ENCODE measurements at regions of chr16 and their contacts with region 1.

Region 1: DNA sequence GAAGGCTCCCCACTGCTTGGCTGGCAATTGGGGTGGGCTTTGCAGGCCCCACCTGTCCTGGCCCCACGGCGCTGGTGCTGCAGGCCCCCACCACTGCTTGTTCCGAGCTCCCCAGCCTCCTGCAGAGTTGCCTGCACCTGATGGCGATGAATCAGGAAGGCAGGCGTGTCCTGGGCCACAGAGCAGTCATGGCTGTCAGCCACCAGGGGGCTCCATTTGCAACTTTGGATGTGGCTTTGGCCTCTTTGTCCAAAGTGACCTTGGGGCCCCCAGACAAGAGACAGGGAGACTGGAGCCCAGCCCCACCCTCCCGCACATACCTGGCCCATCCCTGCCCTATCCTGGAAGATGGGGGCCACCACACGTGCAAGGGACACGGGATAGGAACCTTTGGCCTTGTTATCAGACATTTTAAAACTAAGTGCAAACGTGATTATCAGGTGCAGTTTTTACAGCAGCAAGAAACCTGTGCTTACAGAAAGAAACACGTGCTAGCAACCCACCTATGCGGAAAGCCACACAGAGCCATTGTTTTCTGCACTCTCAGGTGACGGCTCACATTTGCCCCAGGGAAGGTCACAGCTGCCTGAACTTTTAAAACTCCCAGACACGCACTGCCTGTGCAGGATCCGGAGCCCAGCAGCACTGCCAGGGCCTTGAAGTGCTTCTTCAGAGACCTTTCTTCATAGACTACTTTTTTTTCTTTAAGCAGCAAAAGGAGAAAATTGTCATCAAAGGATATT is at the start of gene DNASE1:
- DNase-seq: peak; percentile 80
- H3K4me3 ChIP-seq: no peak within 1 kb of the TSS
- H3K27ac ChIP-seq: no peak within 1 kb of the TSS; a peak in 1 of 4 replicates
- H3K4me1 ChIP-seq: peaks cover 0 to 4% of the 10 kb centered on the region in 2 experiments; a peak in 1 of 4 replicates
- H3K27me3 ChIP-seq: no peaks in the 10 kb centered on the region
- CTCF ChIP-seq: peak; percentile 71
- EP300 ChIP-seq: no peak
- RAD21 ChIP-seq: peak; percentile 44
- polyA plus RNA-seq, gene DNASE1: 19.8 and 27.2 TPM in 2 replicates

Region 2: DNA sequence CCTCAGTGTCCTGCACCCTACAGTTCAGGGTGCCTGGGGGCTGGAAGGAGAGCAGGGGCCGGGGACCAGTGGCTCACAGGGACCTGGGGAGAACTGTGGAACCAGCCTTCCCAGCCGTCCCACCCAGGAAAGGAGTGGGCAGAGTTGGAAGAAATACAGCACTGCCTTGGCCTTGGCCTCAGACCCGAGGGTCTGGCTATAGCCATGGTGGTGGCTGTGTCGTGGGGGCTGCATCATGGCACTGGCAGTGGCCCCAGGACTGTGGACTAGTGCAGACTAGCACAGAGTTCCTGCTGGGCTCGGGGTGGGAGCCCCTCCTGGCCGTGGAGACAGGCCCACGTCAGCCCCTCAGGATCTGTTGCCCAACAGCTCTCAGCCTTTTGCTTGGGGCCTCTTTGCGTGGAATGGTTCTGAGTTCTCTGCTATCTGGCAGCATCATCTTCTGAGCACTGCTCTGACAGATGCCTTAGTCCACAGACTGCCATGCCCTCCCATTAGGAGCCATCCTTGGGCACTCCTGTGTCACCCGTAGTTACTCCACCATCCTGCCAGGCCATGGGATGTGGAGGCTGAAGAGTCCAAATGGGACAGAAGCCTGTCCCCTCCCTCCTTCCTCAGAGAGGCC is 12.5 kb before region 1 on chr16:
- CTCF ChIA-PET with region 1: interaction called, 18 read pairs
- POLR2A ChIA-PET with region 1: no interaction called
- DNase-seq: peak; percentile 46
- H3K4me3 ChIP-seq: no peak overlapping the region
- H3K27ac ChIP-seq: peak overlapping the region in 1 of 2 experiments; percentile 75; a peak in 2 of 4 replicates
- H3K4me1 ChIP-seq: peaks cover 9 to 35% of the 10 kb centered on the region in 2 experiments; a peak in 2 of 4 replicates
- H3K27me3 ChIP-seq: no peaks in the 10 kb centered on the region
- CTCF ChIP-seq: no peak
- EP300 ChIP-seq: no peak
- RAD21 ChIP-seq: no peak

Region 3: GRCh38 chr16:3665508-3665907 is 11.1 kb after region 1 on chr16:
- CTCF ChIA-PET with region 1: interaction called, 15 read pairs
- POLR2A ChIA-PET with region 1: no interaction called
- DNase-seq: no peak
- H3K4me3 ChIP-seq: no peak overlapping the region
- H3K27ac ChIP-seq: no peak overlapping the region
- H3K4me1 ChIP-seq: no peaks in the 10 kb centered on the region
- H3K27me3 ChIP-seq: no peaks in the 10 kb centered on the region
- CTCF ChIP-seq: no peak
- EP300 ChIP-seq: no peak
- RAD21 ChIP-seq: no peak

Measured in SK-N-SH (cell line).